Breast epithelium (tissue), 4 donors: ENCODE measurements at regions of chr9 and their contacts with region 1.

Region 1: DNA sequence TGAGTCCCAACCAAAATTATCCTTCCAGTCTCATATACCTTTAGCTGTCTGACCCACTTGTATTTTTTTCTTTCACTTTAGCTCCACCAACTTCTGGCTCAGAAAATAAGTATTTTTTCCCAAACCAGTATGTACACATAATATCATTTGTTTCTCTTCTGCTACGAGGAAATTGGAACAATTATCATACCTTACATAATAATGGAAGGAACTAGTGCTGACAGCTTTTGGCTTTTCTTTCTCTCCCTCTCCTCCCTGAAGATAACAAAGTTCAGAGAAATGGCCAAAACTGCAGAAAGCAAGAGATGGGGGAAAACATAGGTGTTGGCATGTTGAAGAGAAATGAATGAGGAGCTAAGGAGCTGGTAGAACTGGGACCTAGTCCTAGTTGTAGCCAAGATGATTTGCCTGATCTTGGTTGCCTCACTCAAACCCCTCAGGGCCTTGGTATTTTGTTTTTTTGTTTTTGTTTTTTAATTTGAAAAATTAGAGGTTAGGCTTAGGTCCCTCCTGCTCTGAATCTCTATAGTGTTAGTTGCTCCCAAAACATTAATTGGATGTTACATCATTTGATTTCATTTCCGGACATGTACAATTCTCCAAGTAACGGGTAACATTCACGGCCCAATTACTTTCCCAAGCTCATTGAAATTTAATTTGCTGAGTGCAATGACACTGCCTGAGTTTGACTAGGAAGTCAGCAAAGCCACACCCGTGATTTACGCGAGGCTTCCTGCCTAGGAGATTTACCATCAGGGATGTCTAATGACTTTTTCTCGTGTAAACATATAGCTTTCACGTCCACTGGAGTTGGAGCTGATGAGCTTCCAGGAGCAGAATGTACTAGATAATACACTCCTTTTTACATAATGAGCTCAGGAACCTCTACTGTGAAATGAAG is 291.6 kb downstream of the TLE1 start:
- DNase-seq: no peak
- H3K4me3 ChIP-seq: no peak overlapping the region
- H3K27ac ChIP-seq: no peak overlapping the region
- H3K4me1 ChIP-seq: peaks cover 5 to 7% of the 10 kb centered on the region in 2 donors
- H3K27me3 ChIP-seq: no peaks in the 10 kb centered on the region
- CTCF ChIP-seq: no peak
- POLR2A ChIP-seq: no peak

Region 2: GRCh38 chr9:81445331-81445921 is 47.7 kb after region 1 on chr9:
- intact Hi-C with region 1: loop called (anchors 2 kb)
- DNase-seq: no peak
- H3K4me3 ChIP-seq: no peak overlapping the region
- H3K27ac ChIP-seq: no peak overlapping the region
- H3K4me1 ChIP-seq: no peaks in the 10 kb centered on the region
- H3K27me3 ChIP-seq: no peaks in the 10 kb centered on the region
- CTCF ChIP-seq: no peak
- POLR2A ChIP-seq: no peak

Region 3: GRCh38 chr9:81489046-81489445 is 91.3 kb after region 1 on chr9:
- intact Hi-C with region 1: no loop called
- DNase-seq: no peak
- H3K4me3 ChIP-seq: no peak overlapping the region
- H3K27ac ChIP-seq: no peak overlapping the region
- H3K4me1 ChIP-seq: no peaks in the 10 kb centered on the region
- H3K27me3 ChIP-seq: no peaks in the 10 kb centered on the region
- CTCF ChIP-seq: no peak
- POLR2A ChIP-seq: no peak